GM18951 (cell line): ENCODE measurements at regions of chr3 and their contacts with region 1.

Region 1: DNA sequence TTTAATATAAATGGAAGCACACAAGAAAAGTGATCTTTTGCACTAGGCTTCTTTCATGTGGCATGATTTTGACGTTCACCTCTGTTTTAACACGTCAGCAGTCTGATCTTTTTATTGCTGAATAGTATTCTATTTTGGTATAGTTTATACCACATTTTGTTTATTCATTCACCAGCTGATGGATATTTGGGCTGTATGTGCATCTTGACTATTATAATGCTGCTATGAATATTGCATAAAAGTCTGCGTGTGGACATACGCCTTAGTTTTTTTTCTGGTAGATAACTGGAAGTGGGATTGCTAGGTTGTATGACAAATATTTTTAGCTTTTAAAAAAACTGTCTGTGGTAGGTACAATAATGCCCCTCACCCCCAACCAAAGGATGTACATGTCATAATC is 14.4 kb downstream of the NAA50 start:
- POLR2A ChIP-seq: no peak

Region 2: GRCh38 chr3:113912552-113913236 is 181.0 kb after region 1 on chr3:
- in situ Hi-C with region 1: loop called (anchors 5 kb)
- POLR2A ChIP-seq: no peak